Ascending aorta (tissue), 2 donors: ENCODE measurements at regions of chr3 and their contacts with region 1.

Region 1: DNA sequence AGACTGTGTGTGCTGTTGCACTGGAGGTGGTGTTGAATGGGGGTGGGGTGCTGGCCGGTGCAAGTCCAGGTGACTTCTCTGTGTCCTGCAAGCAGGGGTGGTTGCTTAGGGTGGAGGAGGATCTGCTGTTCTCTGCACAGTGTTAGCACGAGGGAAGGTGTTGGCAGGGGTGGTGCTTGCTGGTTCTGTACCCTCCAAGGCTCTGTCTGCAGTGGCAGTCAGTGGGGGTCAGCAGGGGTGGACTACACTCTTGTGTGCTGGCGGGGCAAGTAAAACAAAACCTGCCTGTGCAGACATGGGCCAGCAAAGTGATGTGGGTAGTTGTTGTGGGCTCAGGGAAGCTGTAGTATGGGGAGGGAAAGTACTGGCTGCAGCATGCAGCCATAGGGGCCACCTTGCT is 5.5 kb downstream of the ROPN1 start:
- DNase-seq: no peak
- H3K4me3 ChIP-seq: no peak overlapping the region
- H3K27ac ChIP-seq: no peak overlapping the region
- H3K4me1 ChIP-seq: peaks cover 8 to 12% of the 10 kb centered on the region in 2 donors
- H3K27me3 ChIP-seq: no peaks in the 10 kb centered on the region
- CTCF ChIP-seq: no peak

Region 2: DNA sequence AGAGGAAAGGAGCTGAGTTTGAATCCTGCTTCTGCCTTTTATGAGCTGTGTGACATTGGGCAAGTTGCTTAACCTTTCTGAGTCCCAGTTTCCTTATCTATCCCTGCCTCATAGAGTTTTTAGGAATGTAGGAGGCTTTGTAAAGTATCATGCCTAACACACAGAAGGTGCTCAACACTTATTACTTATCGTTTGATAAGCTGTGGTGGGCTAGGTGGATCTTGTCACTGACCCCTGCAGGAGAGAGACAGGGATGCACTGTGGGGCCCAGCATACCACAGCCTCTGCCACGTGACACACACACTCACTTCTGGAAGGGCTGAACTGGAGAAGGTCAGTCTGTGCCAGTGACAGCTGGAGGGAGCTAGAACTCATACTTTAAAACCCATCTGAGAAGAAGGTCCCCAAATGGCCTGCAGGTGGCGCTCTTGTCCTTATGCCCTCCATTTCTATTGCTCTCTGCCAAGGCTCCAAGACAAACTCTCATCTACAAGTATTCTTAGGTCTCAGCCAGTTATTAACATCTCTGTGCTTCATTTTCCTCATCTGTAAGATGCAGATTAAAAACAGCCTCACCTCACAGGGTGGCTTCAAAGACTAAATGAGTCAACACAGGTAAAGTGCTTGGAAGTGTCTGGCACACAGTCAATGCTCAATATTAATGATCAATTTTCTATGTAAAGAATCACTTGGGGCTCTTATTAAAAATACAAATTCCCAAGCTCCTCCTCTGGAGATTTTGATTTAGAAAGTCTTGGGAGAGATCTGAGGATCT is 344.1 kb before region 1 on chr3:
- intact Hi-C with region 1: loop called (anchors 10 kb)
- DNase-seq: peak in 1 of 2 donors; percentile 93
- H3K4me3 ChIP-seq: no peak overlapping the region
- H3K27ac ChIP-seq: peak overlapping the region; percentile 67
- H3K4me1 ChIP-seq: peaks cover 5 to 20% of the 10 kb centered on the region in 2 donors
- H3K27me3 ChIP-seq: no peaks in the 10 kb centered on the region
- CTCF ChIP-seq: peak; percentile 83 to 87 (median 84)

Region 3: DNA sequence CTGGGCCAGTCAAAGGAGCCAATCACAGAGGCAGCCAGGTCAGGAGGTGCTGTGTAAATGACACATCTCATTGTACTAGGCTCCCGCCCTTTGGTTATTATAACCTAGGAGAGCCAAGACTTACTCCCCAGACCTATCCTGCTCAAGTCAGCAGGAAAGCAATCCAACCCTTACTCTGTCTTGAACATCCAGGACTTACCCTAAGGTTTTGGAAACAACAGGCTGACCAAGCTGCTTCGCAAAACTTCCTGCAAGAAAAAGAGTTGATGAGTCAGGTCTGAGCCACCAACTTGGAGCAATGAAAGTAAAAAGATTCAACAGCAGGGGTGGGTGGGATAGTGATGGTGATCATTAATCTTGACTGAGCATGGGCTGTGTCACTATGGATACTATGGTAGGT is 246.7 kb before region 1 on chr3:
- intact Hi-C with region 1: loop called (anchors 5 kb)
- DNase-seq: no peak
- H3K4me3 ChIP-seq: no peak overlapping the region
- H3K27ac ChIP-seq: peak overlapping the region in 1 of 2 donors; percentile 34
- H3K4me1 ChIP-seq: peaks cover 0 to 26% of the 10 kb centered on the region in 2 donors
- H3K27me3 ChIP-seq: no peaks in the 10 kb centered on the region
- CTCF ChIP-seq: no peak

Region 4: GRCh38 chr3:123971406-123971805 is 15.0 kb before region 1 on chr3:
- intact Hi-C with region 1: no loop called
- DNase-seq: no peak
- H3K4me3 ChIP-seq: no peak overlapping the region
- H3K27ac ChIP-seq: no peak overlapping the region
- H3K4me1 ChIP-seq: no peaks in the 10 kb centered on the region
- H3K27me3 ChIP-seq: no peaks in the 10 kb centered on the region
- CTCF ChIP-seq: no peak

Region 5: GRCh38 chr3:124768812-124769211 is 782.4 kb after region 1 on chr3:
- intact Hi-C with region 1: no loop called
- DNase-seq: no peak
- H3K4me3 ChIP-seq: no peak overlapping the region
- H3K27ac ChIP-seq: no peak overlapping the region
- H3K4me1 ChIP-seq: peaks cover 23 to 29% of the 10 kb centered on the region in 2 donors
- H3K27me3 ChIP-seq: no peaks in the 10 kb centered on the region
- CTCF ChIP-seq: peak in 1 of 3 experiments; percentile 6